OCI-LY7 (cell line): ENCODE measurements at regions of chr9 and their contacts with region 1.

Region 1: DNA sequence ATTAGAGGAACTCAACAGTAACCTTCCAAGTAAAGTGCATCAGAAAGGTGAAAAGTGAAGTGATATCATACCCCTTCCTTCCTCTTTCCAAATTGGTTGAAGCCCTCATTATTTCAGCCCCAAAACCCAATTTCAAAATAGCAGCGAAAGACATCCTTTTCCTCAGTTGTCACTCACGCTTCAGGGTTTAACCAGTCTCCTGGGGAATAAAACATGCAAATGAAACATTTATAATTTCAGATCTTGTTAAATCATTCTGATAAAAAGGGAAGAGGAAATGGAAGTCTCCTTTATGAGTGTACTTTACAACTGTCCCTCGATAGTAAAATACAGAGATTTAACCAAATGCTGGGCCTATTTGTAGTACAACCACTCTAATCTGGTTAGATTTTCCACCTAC is 22.5 kb downstream of the TRPM6 start:
- DNase-seq: peak; percentile 3
- H3K4me3 ChIP-seq: no peak overlapping the region
- H3K27ac ChIP-seq: no peak overlapping the region
- H3K4me1 ChIP-seq: no peaks in the 10 kb centered on the region
- CTCF ChIP-seq: no peak

Region 2: GRCh38 chr9:74804018-74804385 is 61.2 kb before region 1 on chr9:
- CTCF ChIA-PET with region 1: no interaction called
- POLR2A ChIA-PET with region 1: no interaction called
- intact Hi-C with region 1: loop called (anchors 10 kb)
- DNase-seq: no peak
- H3K4me3 ChIP-seq: no peak overlapping the region
- H3K27ac ChIP-seq: no peak overlapping the region
- H3K4me1 ChIP-seq: no peaks in the 10 kb centered on the region
- CTCF ChIP-seq: no peak